MCF 10A (cell line): ENCODE measurements at regions of chr14 and their contacts with region 1.

Region 1: GRCh38 chr14:68911594-68912227 is 67.4 kb downstream of the ACTN1 start:
- DNase-seq: peak; percentile 83
- H3K4me3 Mint-ChIP-seq: no peak overlapping the region
- H3K27ac Mint-ChIP-seq: peak overlapping the region; percentile 77
- H3K4me1 Mint-ChIP-seq: peaks cover 5% of the 10 kb centered on the region
- H3K27me3 Mint-ChIP-seq: no peaks in the 10 kb centered on the region
- CTCF ChIP-seq: peak; percentile 93

Region 2: GRCh38 chr14:68535404-68536017 is 376.2 kb before region 1 on chr14:
- CTCF ChIA-PET with region 1: no interaction called
- POLR2A ChIA-PET with region 1: no interaction called
- intact Hi-C with region 1: no loop called
- DNase-seq: peak; percentile 60
- H3K4me3 Mint-ChIP-seq: no peak overlapping the region
- H3K27ac Mint-ChIP-seq: peak overlapping the region; percentile 72
- H3K4me1 Mint-ChIP-seq: peaks cover 26% of the 10 kb centered on the region
- H3K27me3 Mint-ChIP-seq: no peaks in the 10 kb centered on the region
- CTCF ChIP-seq: no peak

Region 3: GRCh38 chr14:68873376-68873775 is 38.3 kb before region 1 on chr14:
- CTCF ChIA-PET with region 1: interaction called, 14 read pairs
- POLR2A ChIA-PET with region 1: no interaction called
- intact Hi-C with region 1: no loop called
- DNase-seq: peak; percentile 66
- H3K4me3 Mint-ChIP-seq: no peak overlapping the region
- H3K27ac Mint-ChIP-seq: no peak overlapping the region
- H3K4me1 Mint-ChIP-seq: peaks cover 14% of the 10 kb centered on the region
- H3K27me3 Mint-ChIP-seq: no peaks in the 10 kb centered on the region
- CTCF ChIP-seq: no peak

Region 4: GRCh38 chr14:68939893-68940613 is 28.3 kb after region 1 on chr14:
- CTCF ChIA-PET with region 1: interaction called, 53 read pairs
- POLR2A ChIA-PET with region 1: interaction called, 5 read pairs
- intact Hi-C with region 1: no loop called
- DNase-seq: peak; percentile 94
- H3K4me3 Mint-ChIP-seq: no peak overlapping the region
- H3K27ac Mint-ChIP-seq: peak overlapping the region; percentile 88
- H3K4me1 Mint-ChIP-seq: peaks cover 59% of the 10 kb centered on the region
- H3K27me3 Mint-ChIP-seq: no peaks in the 10 kb centered on the region
- CTCF ChIP-seq: no peak

Region 5: GRCh38 chr14:69090187-69090789 is 178.6 kb after region 1 on chr14:
- CTCF ChIA-PET with region 1: interaction called, 41 read pairs
- POLR2A ChIA-PET with region 1: interaction called, 3 read pairs
- intact Hi-C with region 1: loop called (anchors 1 kb)
- DNase-seq: peak; percentile 65
- H3K4me3 Mint-ChIP-seq: no peak overlapping the region
- H3K27ac Mint-ChIP-seq: no peak overlapping the region
- H3K4me1 Mint-ChIP-seq: peaks cover 28% of the 10 kb centered on the region
- H3K27me3 Mint-ChIP-seq: no peaks in the 10 kb centered on the region
- CTCF ChIP-seq: peak; percentile 80

Region 6: DNA sequence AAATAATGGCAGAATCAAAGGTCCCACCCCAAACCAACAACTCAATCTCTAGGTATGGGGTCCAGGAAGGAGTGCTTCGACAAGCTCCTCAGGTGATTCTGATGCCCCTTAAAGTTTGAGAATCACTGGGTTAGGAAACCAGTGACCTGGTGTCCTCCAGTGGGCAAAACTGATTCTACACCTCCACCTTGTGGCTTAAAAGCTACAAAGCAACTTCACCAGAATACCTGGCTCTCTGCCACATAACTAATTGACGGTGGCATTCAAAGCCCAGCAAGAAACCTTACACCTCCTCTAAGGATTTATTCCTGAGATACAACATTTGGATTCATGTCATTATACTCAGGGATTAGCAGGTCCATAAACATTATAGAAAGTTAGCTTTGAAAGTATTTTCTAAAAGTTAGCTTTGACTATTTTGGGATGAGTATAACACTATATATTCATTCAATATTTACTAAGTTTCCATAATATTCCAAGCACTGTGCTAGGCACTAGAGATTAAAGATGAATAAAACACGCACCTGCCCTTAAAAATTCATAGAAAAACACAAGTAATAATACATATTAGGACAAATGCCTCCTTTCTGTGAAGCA is 195.8 kb after region 1 on chr14:
- CTCF ChIA-PET with region 1: interaction called, 53 read pairs
- POLR2A ChIA-PET with region 1: interaction called, 6 read pairs
- intact Hi-C with region 1: loop called (anchors 1 kb)
- DNase-seq: peak; percentile 84
- H3K4me3 Mint-ChIP-seq: no peak overlapping the region
- H3K27ac Mint-ChIP-seq: no peak overlapping the region
- H3K4me1 Mint-ChIP-seq: peaks cover 2% of the 10 kb centered on the region
- H3K27me3 Mint-ChIP-seq: no peaks in the 10 kb centered on the region
- CTCF ChIP-seq: peak; percentile 79